Caco-2 (cell line): ENCODE measurements at regions of chrX and their contacts with region 1.

Region 1: GRCh38 chrX:27186664-27187063 is 276.5 kb downstream of the PPP4R3C start:
- DNase-seq: peak in 1 of 2 experiments; percentile 35
- H3K4me3 ChIP-seq: no peak overlapping the region
- H3K4me3 Mint-ChIP-seq: no peak overlapping the region
- H3K27ac Mint-ChIP-seq: no peak overlapping the region
- H3K4me1 ChIP-seq: no peaks in the 10 kb centered on the region
- H3K4me1 Mint-ChIP-seq: no peaks in the 10 kb centered on the region
- H3K27me3 ChIP-seq: no peaks in the 10 kb centered on the region
- H3K27me3 Mint-ChIP-seq: no peaks in the 10 kb centered on the region
- CTCF ChIP-seq: peak; percentile 47

Region 2: GRCh38 chrX:26651755-26652154 is 534.9 kb before region 1 on chrX:
- CTCF ChIA-PET with region 1: no interaction called
- POLR2A ChIA-PET with region 1: no interaction called
- intact Hi-C with region 1: loop called (anchors 2 kb)
- DNase-seq: no peak
- H3K4me3 ChIP-seq: no peak overlapping the region
- H3K4me3 Mint-ChIP-seq: no peak overlapping the region
- H3K27ac Mint-ChIP-seq: no peak overlapping the region
- H3K4me1 ChIP-seq: no peaks in the 10 kb centered on the region
- H3K4me1 Mint-ChIP-seq: no peaks in the 10 kb centered on the region
- H3K27me3 ChIP-seq: no peaks in the 10 kb centered on the region
- H3K27me3 Mint-ChIP-seq: peaks cover 2% of the 10 kb centered on the region
- CTCF ChIP-seq: no peak

Region 3: GRCh38 chrX:26783512-26784225 is 403.0 kb before region 1 on chrX:
- CTCF ChIA-PET with region 1: interaction called, 3 read pairs
- POLR2A ChIA-PET with region 1: no interaction called
- intact Hi-C with region 1: loop called (anchors 1 kb)
- DNase-seq: peak in 1 of 2 experiments; percentile 31
- H3K4me3 ChIP-seq: no peak overlapping the region
- H3K4me3 Mint-ChIP-seq: no peak overlapping the region
- H3K27ac Mint-ChIP-seq: no peak overlapping the region
- H3K4me1 ChIP-seq: no peaks in the 10 kb centered on the region
- H3K4me1 Mint-ChIP-seq: no peaks in the 10 kb centered on the region
- H3K27me3 ChIP-seq: no peaks in the 10 kb centered on the region
- H3K27me3 Mint-ChIP-seq: no peaks in the 10 kb centered on the region
- CTCF ChIP-seq: peak; percentile 6 to 47

Region 4: DNA sequence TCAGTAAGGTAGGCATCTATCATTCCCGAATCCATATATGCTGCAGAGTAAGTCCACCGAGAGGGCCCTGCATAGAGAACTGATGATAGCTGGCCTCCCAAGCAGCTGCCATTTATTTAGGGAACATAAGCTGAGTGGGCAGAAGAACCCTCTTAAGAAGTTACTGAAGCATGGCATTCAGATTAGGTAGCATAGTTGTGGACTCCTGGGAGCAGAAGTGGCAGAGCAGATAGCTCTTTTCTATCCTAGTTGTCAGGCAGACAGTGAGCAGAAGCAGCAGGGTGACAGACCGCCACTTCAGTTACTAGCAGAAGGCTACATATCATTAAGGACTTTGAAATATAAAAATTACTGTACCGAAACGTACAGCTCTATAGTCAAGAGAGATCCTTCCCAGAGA is 178.2 kb before region 1 on chrX:
- CTCF ChIA-PET with region 1: no interaction called
- POLR2A ChIA-PET with region 1: no interaction called
- intact Hi-C with region 1: loop called (anchors 10 kb)
- DNase-seq: no peak
- H3K4me3 ChIP-seq: no peak overlapping the region
- H3K4me3 Mint-ChIP-seq: no peak overlapping the region
- H3K27ac Mint-ChIP-seq: no peak overlapping the region
- H3K4me1 ChIP-seq: no peaks in the 10 kb centered on the region
- H3K4me1 Mint-ChIP-seq: no peaks in the 10 kb centered on the region
- H3K27me3 ChIP-seq: no peaks in the 10 kb centered on the region
- H3K27me3 Mint-ChIP-seq: no peaks in the 10 kb centered on the region
- CTCF ChIP-seq: no peak

Region 5: DNA sequence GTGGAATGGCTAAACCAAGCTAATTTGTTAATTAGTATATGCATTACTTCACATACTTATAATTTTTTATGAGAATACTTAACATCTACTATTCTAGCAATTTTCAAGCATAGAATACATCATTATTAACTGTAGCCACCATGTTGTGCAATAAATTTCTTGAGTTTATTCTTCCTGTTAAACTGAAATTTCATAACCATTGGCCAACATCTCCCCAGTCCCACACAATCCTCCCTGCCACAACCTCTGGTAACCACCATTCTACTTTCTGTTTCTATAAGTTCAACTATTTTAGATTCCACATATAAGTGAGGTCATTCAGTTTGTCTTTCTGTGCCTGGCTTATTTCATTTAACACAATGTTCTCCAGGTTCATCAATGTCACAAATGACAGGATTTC is 68.0 kb after region 1 on chrX:
- CTCF ChIA-PET with region 1: no interaction called
- POLR2A ChIA-PET with region 1: no interaction called
- intact Hi-C with region 1: no loop called
- DNase-seq: no peak
- H3K4me3 ChIP-seq: no peak overlapping the region
- H3K4me3 Mint-ChIP-seq: no peak overlapping the region
- H3K27ac Mint-ChIP-seq: no peak overlapping the region
- H3K4me1 ChIP-seq: no peaks in the 10 kb centered on the region
- H3K4me1 Mint-ChIP-seq: no peaks in the 10 kb centered on the region
- H3K27me3 ChIP-seq: no peaks in the 10 kb centered on the region
- H3K27me3 Mint-ChIP-seq: no peaks in the 10 kb centered on the region
- CTCF ChIP-seq: no peak